Astrocyte of the cerebellum (primary cell): ENCODE measurements at regions of chr4 and their contacts with region 1.

Region 1: GRCh38 chr4:110631584-110632505 is 9.0 kb upstream of the PITX2 start:
- DNase-seq: peak; percentile 69
- H3K4me3 ChIP-seq: peak overlapping the region; percentile 38
- CTCF ChIP-seq: peak; percentile 79

Region 2: DNA sequence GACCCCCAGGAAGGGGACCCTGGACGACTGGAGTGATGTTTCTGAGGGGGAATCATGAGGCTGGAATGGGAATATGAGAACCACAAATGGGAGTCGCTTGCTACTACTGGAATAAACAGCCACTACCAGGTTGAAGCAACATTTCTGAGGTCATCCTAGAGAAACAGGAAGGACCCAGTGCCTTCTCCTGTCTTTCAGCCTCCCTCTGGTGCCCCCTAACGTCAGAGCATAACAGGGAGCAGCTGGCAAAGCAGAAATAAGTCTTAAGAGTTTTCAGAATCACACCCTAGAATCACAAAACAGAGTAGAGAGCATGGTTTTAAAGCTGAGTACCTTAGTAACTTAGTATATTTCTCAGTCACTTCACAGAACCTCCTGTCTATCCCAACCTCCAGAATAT is 338.8 kb after region 1 on chr4:
- in situ Hi-C with region 1: loop called (anchors 25 kb)
- DNase-seq: peak; percentile 8
- H3K4me3 ChIP-seq: no peak overlapping the region
- CTCF ChIP-seq: peak; percentile 60

Region 3: DNA sequence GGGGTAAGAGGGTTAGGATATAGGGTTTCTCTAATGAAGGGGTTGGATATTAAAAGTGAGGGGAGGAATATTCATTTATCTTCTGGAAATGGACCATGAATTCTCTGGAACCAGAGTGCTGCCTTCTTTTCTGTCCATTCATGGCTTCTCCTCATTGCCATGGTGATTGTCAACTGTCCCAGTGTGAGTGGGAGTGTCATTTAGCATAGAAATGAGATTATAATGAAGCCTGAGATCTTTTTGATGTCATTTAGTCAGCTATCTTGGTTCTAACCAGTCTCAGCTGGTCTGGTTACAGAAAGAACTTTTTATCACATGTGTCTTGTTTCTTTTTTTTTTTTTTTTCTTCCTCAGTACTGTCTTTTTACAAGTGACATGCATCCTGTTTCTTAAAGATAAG is 488.3 kb after region 1 on chr4:
- in situ Hi-C with region 1: no loop called
- DNase-seq: no peak
- H3K4me3 ChIP-seq: no peak overlapping the region
- CTCF ChIP-seq: no peak

Region 4: GRCh38 chr4:111628437-111628836 is 996.6 kb after region 1 on chr4:
- in situ Hi-C with region 1: loop called (anchors 5 kb)
- DNase-seq: peak; percentile 82
- H3K4me3 ChIP-seq: no peak overlapping the region
- CTCF ChIP-seq: no peak